ENCODE measurements at regions of chr5 and their contacts with region 1.

Region 1: DNA sequence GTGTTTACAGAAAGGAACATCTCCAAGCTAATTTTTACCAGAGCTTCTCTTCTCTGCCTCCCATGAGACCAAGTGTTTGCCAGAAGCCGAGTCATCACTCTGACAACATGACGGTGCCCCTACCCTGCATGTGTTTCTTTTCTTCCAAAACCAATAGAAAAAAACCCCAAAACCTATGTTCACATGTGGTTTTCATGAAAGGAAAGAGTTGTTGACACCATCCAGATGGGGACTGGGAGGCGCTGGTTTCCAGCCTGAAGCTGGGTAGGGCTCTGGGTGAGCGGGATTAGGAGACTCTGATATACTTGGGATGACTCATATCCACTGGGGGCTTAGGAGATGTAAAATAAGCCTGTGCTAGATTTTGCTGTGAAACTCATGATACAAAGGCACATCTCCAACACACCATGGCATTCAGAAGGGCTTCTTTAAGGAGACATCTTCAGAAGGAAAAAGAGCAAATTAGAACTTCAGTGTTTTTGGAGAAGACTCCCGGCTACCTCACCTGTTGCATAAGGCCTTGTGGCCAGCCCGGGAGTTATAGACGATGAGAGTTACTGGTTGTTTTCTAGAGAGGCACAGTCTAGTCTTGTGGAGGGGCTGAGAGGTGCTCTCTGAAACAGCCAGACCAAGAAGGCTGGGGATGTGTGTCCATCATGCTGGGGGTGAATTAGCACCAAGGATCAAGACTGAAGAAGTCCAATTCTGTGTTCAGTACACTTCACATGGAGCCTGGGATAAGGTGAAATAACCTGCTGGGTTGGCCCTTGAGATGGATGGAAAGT is 108.9 kb upstream of the LHFPL2 start:
- DNase-seq: peak; percentile 61
- H3K4me3 ChIP-seq: no peak overlapping the region
- H3K27ac ChIP-seq: peak overlapping the region; percentile 59
- H3K27me3 ChIP-seq: peaks cover 16% of the 10 kb centered on the region
- CTCF ChIP-seq: no peak

Region 2: DNA sequence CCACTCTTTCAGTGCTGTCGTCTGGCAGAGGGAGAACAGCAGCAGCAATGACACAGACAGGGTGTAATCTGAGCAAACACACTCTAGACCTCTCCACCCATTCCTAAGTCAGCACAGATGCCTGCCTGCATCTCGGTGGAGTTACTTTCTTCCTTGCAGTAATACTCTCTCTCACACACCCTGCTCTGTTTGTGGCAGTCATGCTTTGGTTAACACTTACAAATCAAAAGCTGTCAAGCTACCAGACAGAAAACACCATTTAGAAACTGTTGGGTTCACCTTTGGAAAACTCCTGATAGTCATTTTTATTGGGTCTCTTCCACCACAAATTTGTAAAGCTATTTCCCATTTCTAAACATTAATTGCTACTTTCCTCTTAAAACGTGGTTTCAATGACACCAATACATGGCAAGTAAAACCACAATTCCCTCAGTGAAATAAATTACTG is 136.1 kb before region 1 on chr5:
- CTCF ChIA-PET with region 1: no interaction called
- POLR2A ChIA-PET with region 1: no interaction called
- DNase-seq: no peak
- H3K4me3 ChIP-seq: no peak overlapping the region
- H3K27ac ChIP-seq: no peak overlapping the region
- H3K27me3 ChIP-seq: no peaks in the 10 kb centered on the region
- CTCF ChIP-seq: no peak

Region 3: DNA sequence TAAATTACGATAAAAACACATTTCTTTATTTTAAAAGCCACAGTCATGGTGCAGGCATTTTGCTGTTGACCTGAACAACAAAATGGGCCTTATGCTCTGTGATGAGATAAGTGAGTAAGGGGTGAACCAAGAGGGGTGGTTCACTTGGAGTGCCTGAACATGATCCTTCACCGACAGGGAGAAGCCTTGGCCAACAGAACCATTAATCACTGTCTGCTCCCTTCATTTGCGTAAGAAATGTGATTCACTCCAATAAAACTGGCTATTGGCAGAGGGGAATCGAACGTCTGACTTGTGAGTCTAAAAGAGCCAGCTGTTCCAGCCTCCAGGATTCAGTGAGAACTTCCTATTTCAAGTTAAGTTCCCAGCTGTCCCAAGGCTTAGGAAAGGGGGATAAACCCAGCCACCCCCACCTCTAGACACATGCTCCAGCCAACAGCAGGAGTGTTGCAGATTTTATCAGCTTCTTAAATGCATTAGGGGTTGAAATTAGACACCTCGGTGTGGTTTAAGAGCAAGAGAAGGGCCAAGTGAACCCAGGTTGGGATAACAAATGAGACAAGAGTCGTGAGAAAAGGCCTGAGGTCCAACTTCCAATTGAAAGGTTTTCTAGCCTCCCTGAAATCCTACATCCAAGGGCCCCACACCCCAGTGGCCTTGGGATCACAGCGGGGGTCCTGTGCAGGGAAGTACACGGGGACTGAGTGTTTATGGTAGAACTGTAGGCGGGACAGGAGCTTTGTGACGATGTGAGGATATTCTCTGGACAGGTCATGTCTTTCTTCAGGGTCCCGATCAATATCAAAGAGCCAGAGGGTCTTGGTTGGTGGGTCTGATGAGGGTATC is 22.5 kb after region 1 on chr5:
- CTCF ChIA-PET with region 1: interaction called, 4 read pairs
- POLR2A ChIA-PET with region 1: interaction called, 12 read pairs
- DNase-seq: peak; percentile 79
- H3K4me3 ChIP-seq: no peak overlapping the region
- H3K27ac ChIP-seq: peak overlapping the region; percentile 69
- H3K27me3 ChIP-seq: no peaks in the 10 kb centered on the region
- CTCF ChIP-seq: no peak

Region 4: GRCh38 chr5:78908173-78909061 is 151.0 kb after region 1 on chr5:
- CTCF ChIA-PET with region 1: no interaction called
- POLR2A ChIA-PET with region 1: interaction called, 11 read pairs
- DNase-seq: peak; percentile 66
- H3K4me3 ChIP-seq: peak overlapping the region; percentile 39
- H3K27ac ChIP-seq: peak overlapping the region; percentile 98
- H3K27me3 ChIP-seq: no peaks in the 10 kb centered on the region
- CTCF ChIP-seq: 0 out of 2 replicates have a peak, but pooled peaks have one; percentile 2

Region 5: GRCh38 chr5:79157305-79157704 is 399.8 kb after region 1 on chr5:
- CTCF ChIA-PET with region 1: interaction called, 13 read pairs
- POLR2A ChIA-PET with region 1: no interaction called
- DNase-seq: no peak
- H3K4me3 ChIP-seq: no peak overlapping the region
- H3K27ac ChIP-seq: no peak overlapping the region
- H3K27me3 ChIP-seq: peaks cover 4% of the 10 kb centered on the region
- CTCF ChIP-seq: no peak

Measured in AG04450 (cell line).